Natural killer cell (primary cell): ENCODE measurements at regions of chr5 and their contacts with region 1.

Region 1: DNA sequence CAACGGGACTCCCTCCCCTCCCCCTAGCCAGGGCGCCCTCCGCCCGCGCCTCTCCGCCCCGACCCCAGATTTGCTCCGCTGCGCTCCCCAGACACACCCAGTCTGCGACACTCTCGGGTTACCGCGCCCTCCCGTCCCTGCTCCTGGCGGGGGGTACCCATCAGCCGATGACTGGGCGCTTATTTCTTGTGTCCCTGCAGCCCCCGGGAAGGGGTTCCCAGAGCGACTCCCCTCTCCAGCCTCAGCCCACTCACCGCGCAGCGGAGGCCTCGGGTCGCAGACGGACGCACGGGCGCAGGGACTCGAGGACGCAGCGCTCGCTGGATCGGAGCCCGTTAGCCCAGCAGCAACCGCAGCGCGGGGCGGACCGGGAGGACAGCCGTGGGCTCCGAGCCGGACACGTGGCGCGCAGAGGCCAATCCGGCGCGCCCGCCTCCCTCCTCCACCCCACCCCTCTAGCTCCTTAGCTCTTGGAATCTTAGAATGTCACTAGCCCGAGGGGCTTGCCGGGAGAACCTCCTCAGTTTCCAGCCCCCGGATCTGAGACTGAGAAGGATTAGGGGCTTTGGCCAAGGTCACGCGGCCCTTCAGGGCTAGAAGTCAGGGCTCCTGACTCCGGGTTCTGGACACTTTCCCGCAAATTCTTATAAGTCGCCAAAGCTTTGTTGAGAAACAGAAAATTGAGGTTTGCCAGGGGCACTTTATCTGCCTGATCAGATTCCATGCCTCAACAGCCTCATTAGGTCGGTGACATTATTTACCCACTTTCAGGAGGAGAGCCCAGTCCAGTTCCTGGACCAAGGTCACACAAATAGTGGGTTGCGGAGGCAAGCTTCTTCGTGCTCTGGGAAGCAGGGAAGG is at the start of gene ANXA6:
- DNase-seq: peak; percentile 60 to 85
- ATAC-seq: peak; percentile 89 to 95 (median 93)
- H3K4me3 ChIP-seq: peak within 1 kb of the TSS; percentile 95
- H3K4me3 Mint-ChIP-seq: peak within 1 kb of the TSS; percentile 96
- H3K27ac ChIP-seq: peak within 1 kb of the TSS; percentile 80
- H3K27ac Mint-ChIP-seq: peak within 1 kb of the TSS; percentile 80 to 95
- H3K4me1 ChIP-seq: peaks cover 54% of the 10 kb centered on the region
- H3K4me1 Mint-ChIP-seq: peaks cover 58 to 60% of the 10 kb centered on the region in 2 donors
- H3K27me3 ChIP-seq: no peaks in the 10 kb centered on the region
- H3K27me3 Mint-ChIP-seq: no peaks in the 10 kb centered on the region
- CTCF ChIP-seq: no peak
- total RNA-seq, gene ANXA6: 504 to 629 (median 535) TPM

Region 2: GRCh38 chr5:151139015-151139414 is 18.6 kb before region 1 on chr5:
- intact Hi-C with region 1: loop called (anchors 1 kb)
- DNase-seq: peak; percentile 56 to 72
- ATAC-seq: peak; percentile 85 to 95 (median 94)
- H3K4me3 ChIP-seq: no peak overlapping the region
- H3K4me3 Mint-ChIP-seq: peak overlapping the region; percentile 53
- H3K27ac ChIP-seq: peak overlapping the region; percentile 83
- H3K27ac Mint-ChIP-seq: peak overlapping the region; percentile 80 to 95
- H3K4me1 ChIP-seq: peaks cover 67% of the 10 kb centered on the region
- H3K4me1 Mint-ChIP-seq: peaks cover 67 to 90% of the 10 kb centered on the region in 2 donors
- H3K27me3 ChIP-seq: no peaks in the 10 kb centered on the region
- H3K27me3 Mint-ChIP-seq: no peaks in the 10 kb centered on the region
- CTCF ChIP-seq: no peak

Region 3: GRCh38 chr5:151213800-151214613 is 56.4 kb after region 1 on chr5:
- intact Hi-C with region 1: loop called (anchors 10 kb)
- DNase-seq: peak; percentile 77 to 93
- ATAC-seq: peak; percentile 86 to 97 (median 91)
- H3K4me3 ChIP-seq: peak overlapping the region; percentile 48
- H3K4me3 Mint-ChIP-seq: peak overlapping the region; percentile 88
- H3K27ac ChIP-seq: peak overlapping the region; percentile 97
- H3K27ac Mint-ChIP-seq: peak overlapping the region; percentile 88 to 92
- H3K4me1 ChIP-seq: peaks cover 99% of the 10 kb centered on the region
- H3K4me1 Mint-ChIP-seq: peaks cover 80 to 81% of the 10 kb centered on the region in 2 donors
- H3K27me3 ChIP-seq: no peaks in the 10 kb centered on the region
- H3K27me3 Mint-ChIP-seq: no peaks in the 10 kb centered on the region
- CTCF ChIP-seq: no peak

Region 4: DNA sequence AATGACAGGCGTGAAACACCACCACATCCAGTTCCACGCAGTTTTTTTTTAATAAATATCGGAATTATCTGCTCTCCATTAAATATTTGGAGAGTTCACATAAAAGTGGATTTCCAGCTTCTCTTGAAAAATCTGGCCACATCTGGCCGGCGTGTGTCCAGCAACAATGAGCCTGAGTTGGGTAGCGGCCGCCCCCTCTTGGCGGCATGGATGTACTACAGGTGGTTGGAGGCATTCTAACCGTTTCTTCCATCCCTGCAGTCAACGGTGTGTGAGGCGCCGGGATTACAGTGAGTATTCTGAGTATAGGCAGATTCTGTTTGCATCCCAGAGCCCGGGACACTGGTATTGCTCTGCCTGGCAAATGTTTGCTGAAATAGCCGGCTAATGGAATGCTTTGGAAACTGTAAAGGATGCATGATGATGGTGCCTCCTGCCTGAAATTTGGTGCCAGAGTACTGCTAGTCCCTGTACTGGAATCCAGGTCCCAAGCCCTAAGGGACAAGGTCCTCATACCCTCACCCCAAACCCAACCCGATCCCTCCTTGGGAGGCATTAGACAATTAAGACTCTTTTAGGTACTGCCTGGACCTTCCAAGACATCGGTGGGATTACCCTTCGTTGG is 81.7 kb after region 1 on chr5:
- intact Hi-C with region 1: loop called (anchors 5 kb)
- DNase-seq: peak; percentile 64 to 67
- ATAC-seq: peak; percentile 82 to 93 (median 83)
- H3K4me3 ChIP-seq: no peak overlapping the region
- H3K4me3 Mint-ChIP-seq: no peak overlapping the region
- H3K27ac ChIP-seq: no peak overlapping the region
- H3K27ac Mint-ChIP-seq: no peak overlapping the region
- H3K4me1 ChIP-seq: peaks cover 17% of the 10 kb centered on the region
- H3K4me1 Mint-ChIP-seq: peaks cover 19% of the 10 kb centered on the region in 2 donors
- H3K27me3 ChIP-seq: no peaks in the 10 kb centered on the region
- H3K27me3 Mint-ChIP-seq: no peaks in the 10 kb centered on the region
- CTCF ChIP-seq: peak; percentile 95

Region 5: GRCh38 chr5:151470439-151470838 is 312.8 kb after region 1 on chr5:
- intact Hi-C with region 1: no loop called
- DNase-seq: no peak
- ATAC-seq: no peak
- H3K4me3 ChIP-seq: no peak overlapping the region
- H3K4me3 Mint-ChIP-seq: no peak overlapping the region
- H3K27ac ChIP-seq: no peak overlapping the region
- H3K27ac Mint-ChIP-seq: no peak overlapping the region
- H3K4me1 ChIP-seq: no peaks in the 10 kb centered on the region
- H3K4me1 Mint-ChIP-seq: no peaks in the 10 kb centered on the region
- H3K27me3 ChIP-seq: no peaks in the 10 kb centered on the region
- H3K27me3 Mint-ChIP-seq: no peaks in the 10 kb centered on the region
- CTCF ChIP-seq: no peak

Region 6: GRCh38 chr5:151541571-151541970 is 383.9 kb after region 1 on chr5:
- intact Hi-C with region 1: no loop called
- DNase-seq: no peak
- ATAC-seq: no peak
- H3K4me3 ChIP-seq: no peak overlapping the region
- H3K4me3 Mint-ChIP-seq: no peak overlapping the region
- H3K27ac ChIP-seq: no peak overlapping the region
- H3K27ac Mint-ChIP-seq: no peak overlapping the region
- H3K4me1 ChIP-seq: no peaks in the 10 kb centered on the region
- H3K4me1 Mint-ChIP-seq: no peaks in the 10 kb centered on the region
- H3K27me3 ChIP-seq: no peaks in the 10 kb centered on the region
- H3K27me3 Mint-ChIP-seq: peaks cover 0 to 8% of the 10 kb centered on the region in 2 donors
- CTCF ChIP-seq: no peak